Endothelial cell of umbilical vein (primary cell): ENCODE measurements at regions of chr11 and their contacts with region 1.

Region 1: GRCh38 chr11:96228473-96228891 is 114.5 kb downstream of the MAML2 start:
- DNase-seq: peak; percentile 96
- H3K4me3 ChIP-seq: peak overlapping the region in 1 of 3 experiments; percentile 9
- H3K27ac ChIP-seq: peak overlapping the region; percentile 98
- H3K4me1 ChIP-seq: peaks cover 50% of the 10 kb centered on the region
- H3K27me3 ChIP-seq: no peaks in the 10 kb centered on the region
- CTCF ChIP-seq: no peak
- POLR2A ChIP-seq: no peak

Region 2: GRCh38 chr11:96012086-96012824 is 216.2 kb before region 1 on chr11:
- CTCF ChIA-PET with region 1: no interaction called
- POLR2A ChIA-PET with region 1: no interaction called
- dilution Hi-C with region 1: no loop called
- intact Hi-C with region 1: loop called (anchors 2 kb)
- DNase-seq: peak; percentile 85
- H3K4me3 ChIP-seq: no peak overlapping the region
- H3K27ac ChIP-seq: no peak overlapping the region
- H3K4me1 ChIP-seq: peaks cover 8% of the 10 kb centered on the region
- H3K27me3 ChIP-seq: no peaks in the 10 kb centered on the region
- CTCF ChIP-seq: peak; percentile 50 to 58
- POLR2A ChIP-seq: no peak

Region 3: DNA sequence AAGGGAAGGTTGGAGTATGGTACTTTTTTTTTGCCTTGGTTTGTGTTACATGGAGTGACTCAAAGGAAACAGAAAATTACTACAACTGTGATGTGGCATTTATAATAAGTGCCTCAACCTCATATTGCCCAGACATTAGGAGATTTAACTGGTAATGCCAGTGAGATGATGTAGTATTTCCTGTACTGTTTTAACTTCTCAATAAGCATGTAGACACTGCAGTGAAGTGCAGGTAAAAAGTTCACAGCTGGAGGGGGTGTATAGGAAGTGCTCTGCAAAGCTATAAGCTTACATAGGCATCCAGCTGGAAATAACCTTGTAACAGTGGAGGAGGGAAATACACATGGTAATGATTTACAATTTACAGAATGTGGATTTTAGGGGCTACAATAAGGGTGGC is 166.3 kb before region 1 on chr11:
- CTCF ChIA-PET with region 1: no interaction called
- POLR2A ChIA-PET with region 1: no interaction called
- dilution Hi-C with region 1: no loop called
- intact Hi-C with region 1: no loop called
- DNase-seq: peak; percentile 66
- H3K4me3 ChIP-seq: no peak overlapping the region
- H3K27ac ChIP-seq: peak overlapping the region; percentile 42
- H3K4me1 ChIP-seq: peaks cover 17% of the 10 kb centered on the region
- H3K27me3 ChIP-seq: no peaks in the 10 kb centered on the region
- CTCF ChIP-seq: no peak
- POLR2A ChIP-seq: no peak

Region 4: GRCh38 chr11:96155627-96156378 is 72.7 kb before region 1 on chr11:
- CTCF ChIA-PET with region 1: interaction called, 9 read pairs
- POLR2A ChIA-PET with region 1: no interaction called
- dilution Hi-C with region 1: no loop called
- intact Hi-C with region 1: loop called (anchors 1 kb)
- DNase-seq: peak; percentile 92
- H3K4me3 ChIP-seq: no peak overlapping the region
- H3K27ac ChIP-seq: peak overlapping the region; percentile 93
- H3K4me1 ChIP-seq: peaks cover 38% of the 10 kb centered on the region
- H3K27me3 ChIP-seq: no peaks in the 10 kb centered on the region
- CTCF ChIP-seq: peak; percentile 29 to 30
- POLR2A ChIP-seq: no peak

Region 5: GRCh38 chr11:96215110-96215782 is 13.2 kb before region 1 on chr11:
- CTCF ChIA-PET with region 1: interaction called, 7 read pairs
- POLR2A ChIA-PET with region 1: interaction called, 3 read pairs
- dilution Hi-C with region 1: no loop called
- intact Hi-C with region 1: loop called (anchors 1 kb)
- DNase-seq: peak; percentile 81
- H3K4me3 ChIP-seq: peak overlapping the region in 1 of 3 experiments; percentile 4
- H3K27ac ChIP-seq: peak overlapping the region; percentile 92
- H3K4me1 ChIP-seq: peaks cover 66% of the 10 kb centered on the region
- H3K27me3 ChIP-seq: no peaks in the 10 kb centered on the region
- CTCF ChIP-seq: no peak
- POLR2A ChIP-seq: peak; percentile 38

Region 6: GRCh38 chr11:96254087-96254486 is 25.6 kb after region 1 on chr11:
- CTCF ChIA-PET with region 1: interaction called, 4 read pairs
- POLR2A ChIA-PET with region 1: no interaction called
- dilution Hi-C with region 1: no loop called
- intact Hi-C with region 1: loop called (anchors 1 kb)
- DNase-seq: peak; percentile 94
- H3K4me3 ChIP-seq: peak overlapping the region in 1 of 3 experiments; percentile 58
- H3K27ac ChIP-seq: peak overlapping the region; percentile 65
- H3K4me1 ChIP-seq: peaks cover 33% of the 10 kb centered on the region
- H3K27me3 ChIP-seq: no peaks in the 10 kb centered on the region
- CTCF ChIP-seq: no peak
- POLR2A ChIP-seq: peak; percentile 36